ENCODE measurements at regions of chr10 and their contacts with region 1.

Region 1: DNA sequence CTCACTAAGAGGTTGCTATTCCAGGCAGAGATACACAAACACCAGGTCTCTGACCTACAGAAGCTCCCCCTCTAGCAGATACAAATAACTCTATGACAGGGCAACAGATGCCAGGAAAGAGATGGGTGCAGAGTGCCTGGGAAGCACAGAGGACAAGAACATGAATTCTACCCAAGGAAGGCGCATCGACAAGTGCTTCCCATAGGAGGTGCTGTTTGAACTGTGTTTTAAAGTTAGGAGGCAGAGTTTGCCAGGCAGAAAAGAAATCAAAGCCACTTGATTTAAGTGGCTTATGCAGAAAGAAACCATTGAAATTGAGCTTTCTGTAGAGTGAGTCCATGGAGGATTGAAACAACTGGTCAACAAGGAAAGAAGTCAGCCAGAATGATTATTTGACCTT is 35.3 kb upstream of the EGR2 start:
- DNase-seq: peak; percentile 39
- H3K4me3 Mint-ChIP-seq: no peak overlapping the region
- H3K27ac Mint-ChIP-seq: no peak overlapping the region
- H3K4me1 Mint-ChIP-seq: peaks cover 29% of the 10 kb centered on the region
- H3K27me3 Mint-ChIP-seq: peaks cover 10% of the 10 kb centered on the region

Region 2: DNA sequence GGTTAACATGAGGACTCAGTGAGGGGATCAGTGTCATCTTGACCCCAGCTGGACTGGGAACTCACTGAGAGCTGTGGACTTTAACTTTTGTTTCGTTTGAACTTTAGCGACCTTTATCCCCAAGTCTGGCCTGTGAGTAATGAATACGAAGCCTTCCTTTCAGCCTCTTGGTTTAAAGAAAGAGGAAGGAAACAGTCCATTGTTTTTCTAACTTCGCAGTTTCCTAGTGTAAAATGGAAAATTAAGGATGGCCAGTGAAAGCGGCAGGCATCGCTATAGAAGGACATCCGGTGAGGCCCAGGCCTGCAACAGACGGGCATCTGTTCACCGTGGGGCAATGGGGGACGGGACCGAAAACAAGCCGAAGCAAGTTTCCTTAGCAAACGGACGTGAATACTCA is 91.0 kb before region 1 on chr10:
- CTCF ChIA-PET with region 1: no interaction called
- intact Hi-C with region 1: no loop called
- DNase-seq: no peak
- H3K4me3 Mint-ChIP-seq: no peak overlapping the region
- H3K27ac Mint-ChIP-seq: no peak overlapping the region
- H3K4me1 Mint-ChIP-seq: peaks cover 24% of the 10 kb centered on the region
- H3K27me3 Mint-ChIP-seq: no peaks in the 10 kb centered on the region

Region 3: DNA sequence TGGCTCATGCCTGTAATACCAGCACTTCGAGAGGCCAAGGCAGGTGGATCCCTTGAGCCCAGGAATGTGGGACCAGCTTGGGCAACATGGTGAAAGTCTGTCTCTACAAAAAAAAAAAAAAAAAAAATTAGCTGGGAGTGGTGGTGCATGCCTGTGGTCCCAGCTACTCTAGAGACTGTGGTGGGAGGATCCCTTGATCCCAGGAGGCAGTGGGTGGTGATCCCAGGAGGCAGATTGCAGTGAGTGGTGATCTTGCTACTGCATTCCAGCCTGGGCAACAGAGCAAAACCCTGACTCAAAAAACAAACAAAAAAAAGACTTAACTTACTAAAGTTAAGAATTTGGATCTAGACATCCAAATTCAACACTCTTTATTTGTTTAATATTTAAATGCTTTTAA is 57.1 kb before region 1 on chr10:
- CTCF ChIA-PET with region 1: no interaction called
- intact Hi-C with region 1: no loop called
- DNase-seq: no peak
- H3K4me3 Mint-ChIP-seq: no peak overlapping the region
- H3K27ac Mint-ChIP-seq: no peak overlapping the region
- H3K4me1 Mint-ChIP-seq: peaks cover 4% of the 10 kb centered on the region
- H3K27me3 Mint-ChIP-seq: peaks cover 18% of the 10 kb centered on the region

Region 4: GRCh38 chr10:62980687-62981086 is 129.2 kb after region 1 on chr10:
- CTCF ChIA-PET with region 1: no interaction called
- intact Hi-C with region 1: loop called (anchors 5 kb)
- DNase-seq: peak; percentile 52
- H3K4me3 Mint-ChIP-seq: no peak overlapping the region
- H3K27ac Mint-ChIP-seq: peak overlapping the region; percentile 76
- H3K4me1 Mint-ChIP-seq: peaks cover 23% of the 10 kb centered on the region
- H3K27me3 Mint-ChIP-seq: peaks cover 8% of the 10 kb centered on the region